CD8-positive, alpha-beta memory T cell (primary cell): ENCODE measurements at regions of chr14 and their contacts with region 1.

Region 1: GRCh38 chr14:68843471-68844209 is 50.8 kb upstream of the ZFP36L1 start:
- DNase-seq: peak; percentile 48 to 78 (median 65)
- H3K4me3 ChIP-seq: no peak overlapping the region
- H3K4me3 Mint-ChIP-seq: peak overlapping the region in 5 of 7 donors; percentile 4 to 90 (median 69)
- H3K27ac ChIP-seq: no peak overlapping the region
- H3K27ac Mint-ChIP-seq: peak overlapping the region in 3 of 8 donors; percentile 29 to 83 (median 68)
- H3K4me1 ChIP-seq: peaks cover 9% of the 10 kb centered on the region
- H3K4me1 Mint-ChIP-seq: peaks cover 31 to 40% (median 31%) of the 10 kb centered on the region in 3 donors
- H3K27me3 ChIP-seq: no peaks in the 10 kb centered on the region
- H3K27me3 Mint-ChIP-seq: peaks cover 3 to 8% of the 10 kb centered on the region in 2 donors

Region 2: DNA sequence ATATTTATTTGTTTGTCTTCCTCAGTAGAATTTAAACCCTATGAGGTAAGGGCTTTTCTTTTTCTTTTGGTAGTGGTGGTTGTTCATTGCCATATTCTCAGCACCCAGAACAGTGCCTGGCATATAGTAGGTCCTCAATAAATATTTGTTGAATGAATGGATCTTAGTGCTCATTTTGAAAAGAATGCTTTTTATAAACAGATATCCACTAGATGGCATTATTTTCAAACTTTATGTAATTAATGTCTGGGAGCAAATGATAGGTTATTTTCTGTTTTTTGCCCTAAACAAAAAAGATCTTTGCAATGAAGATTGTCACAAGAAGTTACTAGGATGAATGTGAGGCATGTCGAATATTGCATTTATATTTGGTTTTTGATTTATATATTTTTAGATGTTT is 959.9 kb before region 1 on chr14:
- CTCF ChIA-PET with region 1: interaction called, 17 read pairs
- POLR2A ChIA-PET with region 1: no interaction called
- DNase-seq: no peak
- H3K4me3 ChIP-seq: no peak overlapping the region
- H3K4me3 Mint-ChIP-seq: no peak overlapping the region
- H3K27ac ChIP-seq: no peak overlapping the region
- H3K27ac Mint-ChIP-seq: no peak overlapping the region
- H3K4me1 ChIP-seq: peaks cover 5% of the 10 kb centered on the region
- H3K4me1 Mint-ChIP-seq: peaks cover 27 to 38% (median 33%) of the 10 kb centered on the region in 3 donors
- H3K27me3 ChIP-seq: no peaks in the 10 kb centered on the region
- H3K27me3 Mint-ChIP-seq: no peaks in the 10 kb centered on the region

Region 3: GRCh38 chr14:67943947-67944346 is 899.7 kb before region 1 on chr14:
- CTCF ChIA-PET with region 1: interaction called, 17 read pairs
- POLR2A ChIA-PET with region 1: no interaction called
- DNase-seq: peak; percentile 19 to 52 (median 39)
- H3K4me3 ChIP-seq: no peak overlapping the region
- H3K4me3 Mint-ChIP-seq: no peak overlapping the region
- H3K27ac ChIP-seq: no peak overlapping the region
- H3K27ac Mint-ChIP-seq: no peak overlapping the region
- H3K4me1 ChIP-seq: no peaks in the 10 kb centered on the region
- H3K4me1 Mint-ChIP-seq: peaks cover 0 to 1% (median 0%) of the 10 kb centered on the region in 3 donors
- H3K27me3 ChIP-seq: no peaks in the 10 kb centered on the region
- H3K27me3 Mint-ChIP-seq: no peaks in the 10 kb centered on the region

Region 4: GRCh38 chr14:68788996-68789820 is 54.4 kb before region 1 on chr14:
- CTCF ChIA-PET with region 1: interaction called, 12 read pairs
- POLR2A ChIA-PET with region 1: no interaction called
- DNase-seq: peak; percentile 79 to 93 (median 83)
- H3K4me3 ChIP-seq: peak overlapping the region; percentile 99
- H3K4me3 Mint-ChIP-seq: peak overlapping the region; percentile 91 to 98 (median 97)
- H3K27ac ChIP-seq: peak overlapping the region; percentile 99
- H3K27ac Mint-ChIP-seq: peak overlapping the region; percentile 96 to 100 (median 99)
- H3K4me1 ChIP-seq: peaks cover 52% of the 10 kb centered on the region
- H3K4me1 Mint-ChIP-seq: peaks cover 55 to 64% (median 60%) of the 10 kb centered on the region in 3 donors
- H3K27me3 ChIP-seq: no peaks in the 10 kb centered on the region
- H3K27me3 Mint-ChIP-seq: peaks cover 0 to 16% of the 10 kb centered on the region in 2 donors

Region 5: GRCh38 chr14:68824517-68825347 is 18.9 kb before region 1 on chr14:
- CTCF ChIA-PET with region 1: interaction called, 19 read pairs
- POLR2A ChIA-PET with region 1: no interaction called
- DNase-seq: peak in 1 of 5 donors; percentile 24
- H3K4me3 ChIP-seq: no peak overlapping the region
- H3K4me3 Mint-ChIP-seq: no peak overlapping the region
- H3K27ac ChIP-seq: no peak overlapping the region
- H3K27ac Mint-ChIP-seq: no peak overlapping the region
- H3K4me1 ChIP-seq: peaks cover 35% of the 10 kb centered on the region
- H3K4me1 Mint-ChIP-seq: peaks cover 18 to 22% (median 21%) of the 10 kb centered on the region in 3 donors
- H3K27me3 ChIP-seq: no peaks in the 10 kb centered on the region
- H3K27me3 Mint-ChIP-seq: no peaks in the 10 kb centered on the region